PC-9 (cell line): ENCODE measurements at regions of chr15 and their contacts with region 1.

Region 1: DNA sequence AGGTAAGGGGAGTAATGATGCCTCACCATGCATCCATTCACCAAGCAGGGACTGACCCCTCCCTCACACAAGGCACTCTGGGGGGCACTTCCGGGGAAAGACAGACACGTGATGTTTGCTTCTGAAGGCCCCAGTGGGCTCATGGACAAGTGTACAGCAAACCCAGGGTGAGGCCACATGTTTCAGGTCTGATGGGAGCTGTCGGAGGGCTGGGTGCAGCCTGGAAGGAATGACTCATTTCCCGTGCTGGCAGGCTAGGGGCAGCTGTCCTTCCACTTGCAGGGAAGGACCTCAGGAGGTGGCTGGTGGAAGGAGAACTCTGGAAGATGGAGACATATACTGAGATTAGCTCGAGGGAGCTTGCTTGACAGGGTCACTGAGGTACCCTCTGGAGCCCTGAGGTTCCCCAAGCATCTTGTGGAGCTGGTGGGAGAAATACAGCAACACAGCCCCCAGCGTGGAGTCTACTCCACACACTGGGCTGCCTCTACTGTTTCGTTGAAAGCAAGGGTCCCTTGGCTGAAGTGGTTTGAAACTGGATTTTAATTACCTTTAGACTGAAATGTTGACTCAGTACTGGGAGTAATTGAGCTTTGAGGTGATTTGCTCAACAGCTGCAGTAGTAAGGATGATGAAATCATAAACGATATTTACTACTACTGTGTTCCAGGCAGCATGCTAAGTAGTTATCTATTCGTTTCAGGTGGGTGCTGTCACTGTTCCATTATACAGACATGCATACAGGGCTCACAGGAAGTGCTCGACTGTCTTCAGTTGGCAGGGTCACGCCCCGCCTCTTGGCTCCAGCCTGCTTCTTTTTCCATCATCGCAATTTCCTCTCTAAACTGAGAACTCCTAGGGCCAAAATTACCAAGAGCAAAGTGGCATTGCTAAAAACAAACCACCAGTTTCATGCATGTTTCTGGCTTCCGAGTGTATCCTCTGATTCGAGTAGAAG is 230.4 kb downstream of the ADAMTS17 start:
- DNase-seq: peak; percentile 67 to 74
- H3K4me3 ChIP-seq: no peak overlapping the region
- H3K27ac ChIP-seq: peak overlapping the region; percentile 44; the same call in 1 of the 2 replicates
- H3K4me1 ChIP-seq: peaks cover 16% of the 10 kb centered on the region
- H3K27me3 ChIP-seq: no peaks in the 10 kb centered on the region
- CTCF ChIP-seq: no peak

Region 2: GRCh38 chr15:99944131-99944530 is 167.3 kb before region 1 on chr15:
- CTCF ChIA-PET with region 1: no interaction called
- POLR2A ChIA-PET with region 1: no interaction called
- intact Hi-C with region 1: no loop called
- DNase-seq: no peak
- H3K4me3 ChIP-seq: no peak overlapping the region
- H3K27ac ChIP-seq: no peak overlapping the region
- H3K4me1 ChIP-seq: no peaks in the 10 kb centered on the region
- H3K27me3 ChIP-seq: no peaks in the 10 kb centered on the region
- CTCF ChIP-seq: no peak

Region 3: DNA sequence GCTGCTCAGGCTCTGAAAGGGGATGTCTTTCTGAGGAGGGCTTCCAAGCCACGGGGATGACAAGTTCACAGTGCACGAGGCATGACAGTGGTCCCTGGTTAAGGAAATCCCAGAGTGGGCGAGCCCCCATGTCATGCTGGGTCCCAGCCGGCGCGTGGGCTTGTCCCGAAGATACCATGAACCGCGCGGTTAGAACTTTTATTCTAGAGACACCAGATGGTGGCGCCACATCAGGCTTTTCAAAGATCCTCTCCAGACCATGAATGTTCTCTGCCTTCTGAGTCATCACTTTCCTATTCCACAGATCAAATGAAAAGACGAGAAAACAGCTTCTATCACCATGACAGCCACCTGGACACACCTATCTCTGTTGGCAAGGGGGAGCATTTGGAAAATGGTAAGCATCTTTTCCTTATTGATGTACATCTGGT is 150.4 kb before region 1 on chr15:
- CTCF ChIA-PET with region 1: no interaction called
- POLR2A ChIA-PET with region 1: no interaction called
- intact Hi-C with region 1: loop called (anchors 5 kb)
- DNase-seq: peak; percentile 43 to 46
- H3K4me3 ChIP-seq: no peak overlapping the region
- H3K27ac ChIP-seq: no peak overlapping the region
- H3K4me1 ChIP-seq: no peaks in the 10 kb centered on the region; the same call in 1 of the 2 replicates
- H3K27me3 ChIP-seq: no peaks in the 10 kb centered on the region
- CTCF ChIP-seq: peak; percentile 57

Region 4: DNA sequence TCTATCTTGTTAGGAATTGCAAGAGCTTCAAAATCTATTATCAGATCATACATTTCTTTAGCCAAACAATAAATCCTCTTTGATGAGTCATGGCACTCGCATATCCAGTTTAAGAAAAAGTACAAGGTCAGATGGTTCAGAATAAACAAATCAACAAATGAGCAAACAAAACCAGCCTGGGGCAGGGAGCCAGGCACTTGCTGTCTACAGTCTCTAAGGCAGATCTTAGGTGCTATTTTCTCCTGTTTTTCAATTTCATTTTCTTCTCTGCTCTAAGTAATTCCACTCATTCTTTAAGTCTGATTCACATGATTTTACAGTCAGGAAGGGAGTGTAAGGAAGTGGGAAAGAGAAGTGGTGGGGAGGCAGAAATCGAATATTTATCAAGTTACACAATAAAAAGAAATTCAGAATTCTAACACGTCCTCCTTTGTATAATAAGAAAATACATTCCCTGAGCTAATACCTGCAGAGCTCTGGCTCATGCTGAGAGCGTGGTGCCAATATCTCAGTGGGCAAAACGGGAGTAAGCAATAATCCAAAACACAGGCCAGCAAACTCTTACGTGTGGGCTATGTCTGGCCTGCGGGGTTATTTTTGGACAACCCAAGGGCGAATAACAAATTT is 68.3 kb before region 1 on chr15:
- CTCF ChIA-PET with region 1: no interaction called
- POLR2A ChIA-PET with region 1: no interaction called
- intact Hi-C with region 1: loop called (anchors 1 kb)
- DNase-seq: peak; percentile 78 to 97
- H3K4me3 ChIP-seq: peak overlapping the region; percentile 50; the same call in 1 of the 2 replicates
- H3K27ac ChIP-seq: peak overlapping the region; percentile 93
- H3K4me1 ChIP-seq: peaks cover 34% of the 10 kb centered on the region
- H3K27me3 ChIP-seq: no peaks in the 10 kb centered on the region
- CTCF ChIP-seq: no peak

Region 5: GRCh38 chr15:100060276-100061255 is 50.8 kb before region 1 on chr15:
- CTCF ChIA-PET with region 1: no interaction called
- POLR2A ChIA-PET with region 1: interaction called, 26 read pairs
- intact Hi-C with region 1: no loop called
- DNase-seq: peak in 1 of 2 experiments; percentile 50
- H3K4me3 ChIP-seq: no peak overlapping the region
- H3K27ac ChIP-seq: no peak overlapping the region
- H3K4me1 ChIP-seq: no peaks in the 10 kb centered on the region
- H3K27me3 ChIP-seq: peaks cover 20% of the 10 kb centered on the region
- CTCF ChIP-seq: no peak

Region 6: GRCh38 chr15:100170291-100171210 is 59.2 kb after region 1 on chr15:
- CTCF ChIA-PET with region 1: no interaction called
- POLR2A ChIA-PET with region 1: no interaction called
- intact Hi-C with region 1: no loop called
- DNase-seq: no peak
- H3K4me3 ChIP-seq: no peak overlapping the region
- H3K27ac ChIP-seq: no peak overlapping the region
- H3K4me1 ChIP-seq: no peaks in the 10 kb centered on the region; the same call in 1 of the 2 replicates
- H3K27me3 ChIP-seq: no peaks in the 10 kb centered on the region
- CTCF ChIP-seq: no peak

Region 7: DNA sequence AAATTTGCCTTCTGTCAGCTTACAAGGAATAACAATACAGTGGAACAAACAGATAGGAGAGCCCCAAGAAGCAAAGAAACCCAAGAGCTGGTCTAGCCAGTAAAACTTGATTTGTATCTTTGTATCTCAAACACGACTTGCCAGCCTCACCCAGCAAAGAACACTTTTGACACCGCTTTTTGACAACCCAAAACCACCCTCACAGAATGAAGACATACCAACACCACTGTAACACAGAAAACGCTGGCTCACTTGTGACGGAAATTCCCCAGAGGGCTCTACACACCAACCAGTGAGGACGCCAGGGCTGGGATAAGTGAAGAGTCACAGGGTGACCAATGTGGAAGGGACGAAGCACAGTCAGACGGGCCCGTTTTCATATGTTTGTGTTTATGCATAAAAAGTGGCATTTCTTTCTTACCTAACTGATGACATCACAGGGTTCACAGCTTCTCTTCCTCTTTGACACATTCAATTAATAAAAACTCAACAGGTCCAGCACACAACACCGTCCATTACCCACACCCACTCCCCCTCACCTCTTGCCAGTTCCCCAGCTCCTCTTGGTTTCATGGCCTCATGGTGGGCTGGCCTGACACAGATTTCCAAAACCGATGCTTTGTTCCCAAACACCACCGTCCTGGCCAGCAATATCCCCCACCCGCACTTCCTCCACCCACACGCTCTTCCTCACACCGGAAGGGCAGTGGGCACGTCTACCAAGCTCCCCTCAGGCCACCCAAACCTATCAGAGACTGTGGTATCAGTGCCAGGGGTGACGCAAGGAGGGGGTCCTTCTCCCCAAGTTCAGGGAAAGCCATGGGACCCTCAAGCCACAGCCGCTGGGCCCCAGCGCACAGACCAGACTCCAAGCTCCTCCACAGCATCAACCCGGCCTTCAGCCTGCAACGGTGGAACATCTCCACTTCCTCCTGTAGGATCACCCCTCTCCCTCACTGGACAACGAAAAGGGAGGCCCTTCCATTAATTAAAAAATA is 136.1 kb after region 1 on chr15:
- CTCF ChIA-PET with region 1: no interaction called
- POLR2A ChIA-PET with region 1: no interaction called
- intact Hi-C with region 1: loop called (anchors 1 kb)
- DNase-seq: peak; percentile 54 to 81
- H3K4me3 ChIP-seq: no peak overlapping the region
- H3K27ac ChIP-seq: no peak overlapping the region
- H3K4me1 ChIP-seq: no peaks in the 10 kb centered on the region; the same call in 1 of the 2 replicates
- H3K27me3 ChIP-seq: no peaks in the 10 kb centered on the region
- CTCF ChIP-seq: no peak

Region 8: GRCh38 chr15:100349696-100350433 is 238.5 kb after region 1 on chr15:
- CTCF ChIA-PET with region 1: interaction called, 15 read pairs
- POLR2A ChIA-PET with region 1: no interaction called
- intact Hi-C with region 1: no loop called
- DNase-seq: peak; percentile 65 to 95
- H3K4me3 ChIP-seq: peak overlapping the region; percentile 63; the same call in 1 of the 2 replicates
- H3K27ac ChIP-seq: peak overlapping the region; percentile 51; the same call in 1 of the 2 replicates
- H3K4me1 ChIP-seq: 0 out of 2 replicates have a peak, but pooled peaks cover 12% of the 10 kb centered on the region
- H3K27me3 ChIP-seq: peaks cover 6% of the 10 kb centered on the region; the same call in 1 of the 2 replicates
- CTCF ChIP-seq: peak; percentile 76